ENCODE measurements at regions of chr6 and their contacts with region 1.

Region 1: DNA sequence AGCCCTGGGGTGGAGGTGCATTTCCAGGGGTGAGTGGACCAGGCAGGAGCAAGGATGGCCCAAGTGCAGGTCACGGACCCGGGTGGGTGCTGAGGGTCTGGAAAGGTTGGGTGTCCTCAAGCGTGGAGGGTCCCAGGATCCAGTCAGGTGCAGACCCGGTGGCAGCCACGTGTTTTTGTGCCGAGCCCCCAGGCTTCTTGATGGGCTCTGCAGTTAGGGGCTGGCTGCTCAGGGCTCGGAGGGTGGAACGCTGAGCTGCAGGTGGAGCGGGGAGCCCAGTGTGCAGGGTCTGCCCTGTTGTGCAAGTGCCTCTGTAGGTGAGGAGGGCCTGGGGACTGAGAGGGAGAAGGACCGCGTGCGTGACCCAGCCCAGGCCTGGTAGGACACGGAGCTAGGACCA is 70.9 kb upstream of the HLA-E start:
- DNase-seq: no peak
- ATAC-seq: peak; percentile 42
- H3K4me3 ChIP-seq: no peak overlapping the region
- H3K27ac ChIP-seq: no peak overlapping the region
- H3K4me1 ChIP-seq: no peaks in the 10 kb centered on the region
- H3K27me3 ChIP-seq: peaks cover 12 to 36% of the 10 kb centered on the region in 2 experiments
- CTCF ChIP-seq: no peak
- EP300 ChIP-seq: no peak
- POLR2A ChIP-seq: no peak
- RAD21 ChIP-seq: no peak

Region 2: GRCh38 chr6:29624520-29624961 is 793.9 kb before region 1 on chr6:
- CTCF ChIA-PET with region 1: no interaction called
- POLR2A ChIA-PET with region 1: no interaction called
- in situ Hi-C with region 1: no loop called
- intact Hi-C with region 1: loop called (anchors 5 kb)
- DNase-seq: no peak
- ATAC-seq: no peak
- H3K4me3 ChIP-seq: no peak overlapping the region
- H3K27ac ChIP-seq: no peak overlapping the region
- H3K4me1 ChIP-seq: peaks cover 11% of the 10 kb centered on the region
- H3K27me3 ChIP-seq: peaks cover 10 to 45% of the 10 kb centered on the region in 2 experiments; a peak in 4 of 5 replicates
- CTCF ChIP-seq: no peak
- EP300 ChIP-seq: no peak
- POLR2A ChIP-seq: no peak
- RAD21 ChIP-seq: no peak